Gastrocnemius medialis (tissue), 4 donors: ENCODE measurements at regions of chr17 and their contacts with region 1.

Region 1: GRCh38 chr17:40909351-40909750 is 24.3 kb upstream of the KRT20 start:
- DNase-seq: peak; percentile 52 to 67
- ATAC-seq: peak; percentile 87 to 90
- H3K4me3 ChIP-seq: no peak overlapping the region
- H3K27ac ChIP-seq: no peak overlapping the region
- H3K4me1 ChIP-seq: peaks cover 15% of the 10 kb centered on the region in 2 donors
- H3K27me3 ChIP-seq: peaks cover 0 to 9% (median 0%) of the 10 kb centered on the region in 3 donors
- CTCF ChIP-seq: peak; percentile 59 to 72 (median 66)
- POLR2A ChIP-seq: no peak

Region 2: DNA sequence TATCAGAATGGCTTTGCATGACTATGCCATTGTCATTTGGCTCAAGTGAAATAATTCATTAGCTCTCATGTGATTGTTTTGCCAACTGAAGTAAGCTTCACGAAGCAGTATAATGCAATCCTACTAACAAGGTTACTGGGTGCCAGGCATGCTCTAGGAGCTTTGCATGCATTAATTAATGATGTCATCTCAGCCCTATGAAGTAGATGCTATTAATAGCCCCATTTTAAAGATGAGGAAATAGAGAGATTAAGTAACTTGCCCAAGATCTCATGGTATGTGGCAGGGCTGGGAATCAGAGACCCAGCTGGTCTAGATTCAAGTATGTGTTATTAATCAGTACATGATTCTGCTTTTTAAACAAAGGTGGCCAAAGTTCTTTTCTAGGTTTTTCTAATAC is 43.3 kb after region 1 on chr17:
- in situ Hi-C with region 1: no loop called
- intact Hi-C with region 1: loop called (anchors 5 kb)
- DNase-seq: no peak
- ATAC-seq: peak; percentile 56 to 73
- H3K4me3 ChIP-seq: no peak overlapping the region
- H3K27ac ChIP-seq: peak overlapping the region in 3 of 4 donors; percentile 25 to 52 (median 46)
- H3K4me1 ChIP-seq: peaks cover 13 to 14% of the 10 kb centered on the region in 2 donors
- H3K27me3 ChIP-seq: peaks cover 3 to 15% (median 8%) of the 10 kb centered on the region in 3 donors
- CTCF ChIP-seq: no peak
- POLR2A ChIP-seq: no peak

Region 3: DNA sequence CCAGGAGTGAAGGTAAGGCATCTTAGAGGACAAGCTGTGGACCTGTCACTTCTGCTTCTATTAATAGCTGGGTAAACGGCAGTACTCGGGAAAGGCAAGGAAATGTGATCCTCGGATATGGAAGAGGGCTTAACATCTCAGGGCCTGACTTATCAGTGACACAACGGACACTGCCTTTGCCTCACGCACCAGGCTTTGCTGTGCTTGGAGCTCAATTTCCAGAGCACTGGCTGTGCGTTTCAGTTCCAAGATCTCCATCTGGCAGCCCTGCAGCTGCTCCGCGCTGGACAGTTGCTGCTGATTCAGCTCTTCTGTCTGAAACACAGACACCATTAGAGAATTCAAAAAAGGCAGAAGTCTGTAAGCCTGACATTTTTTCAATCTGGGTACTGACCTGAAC is 71.2 kb after region 1 on chr17:
- in situ Hi-C with region 1: no loop called
- intact Hi-C with region 1: loop called (anchors 2 kb)
- DNase-seq: peak; percentile 19 to 25
- ATAC-seq: peak; percentile 73 to 95
- H3K4me3 ChIP-seq: no peak overlapping the region
- H3K27ac ChIP-seq: peak overlapping the region in 1 of 4 donors; percentile 58
- H3K4me1 ChIP-seq: peaks cover 0 to 5% of the 10 kb centered on the region in 2 donors
- H3K27me3 ChIP-seq: no peaks in the 10 kb centered on the region
- CTCF ChIP-seq: no peak
- POLR2A ChIP-seq: no peak

Region 4: DNA sequence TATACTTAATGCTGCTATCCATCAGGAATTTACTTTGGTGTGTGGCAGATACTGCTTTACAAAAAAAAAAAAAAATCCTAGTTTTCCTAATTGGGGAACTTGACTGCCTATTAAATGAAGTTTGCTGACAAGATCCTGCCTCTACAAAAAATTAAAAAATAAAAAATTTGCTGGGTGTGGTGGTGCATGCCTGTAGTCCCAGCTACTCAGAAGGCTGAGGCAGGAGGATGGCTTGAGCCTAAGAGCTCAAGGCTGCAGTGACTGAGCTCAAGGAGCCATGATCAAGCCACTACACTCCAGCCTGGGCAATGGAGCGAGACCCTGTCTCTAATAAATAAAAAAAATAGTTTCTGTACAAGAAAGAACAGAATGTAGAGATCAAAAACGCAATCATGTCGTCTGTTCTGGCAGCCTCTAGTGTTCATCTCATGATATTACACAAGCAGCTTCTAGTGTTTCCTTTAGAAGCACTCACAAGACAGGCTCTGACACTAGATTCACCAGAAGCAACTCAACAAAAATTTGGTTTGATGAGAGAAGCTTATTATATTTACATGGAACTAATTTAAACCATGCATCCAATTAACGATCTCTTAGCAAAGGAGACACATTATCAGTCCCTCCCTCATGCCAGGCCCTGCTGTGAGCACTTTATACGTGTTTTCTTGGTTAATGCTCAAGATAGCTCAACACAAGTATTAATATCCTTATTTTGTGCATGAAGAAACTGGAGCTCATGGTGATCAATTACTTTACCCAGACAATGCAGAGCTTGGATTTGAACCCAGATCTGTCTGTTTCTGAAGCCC is 412.9 kb after region 1 on chr17:
- in situ Hi-C with region 1: loop called in 3 of 4 experiments (anchors 10 to 25 kb)
- intact Hi-C with region 1: loop called (anchors 5 kb)
- DNase-seq: no peak
- ATAC-seq: no peak
- H3K4me3 ChIP-seq: no peak overlapping the region
- H3K27ac ChIP-seq: no peak overlapping the region
- H3K4me1 ChIP-seq: no peaks in the 10 kb centered on the region
- H3K27me3 ChIP-seq: peaks cover 0 to 5% (median 0%) of the 10 kb centered on the region in 3 donors
- CTCF ChIP-seq: peak in 3 of 5 experiments; percentile 28 to 43 (median 31)
- POLR2A ChIP-seq: no peak

Region 5: GRCh38 chr17:41496820-41497408 is 587.6 kb after region 1 on chr17:
- in situ Hi-C with region 1: loop called in 1 of 4 experiments (anchors 25 kb)
- intact Hi-C with region 1: loop called (anchors 2 kb)
- DNase-seq: peak; percentile 22 to 48
- ATAC-seq: peak; percentile 36 to 55
- H3K4me3 ChIP-seq: no peak overlapping the region
- H3K27ac ChIP-seq: no peak overlapping the region
- H3K4me1 ChIP-seq: no peaks in the 10 kb centered on the region
- H3K27me3 ChIP-seq: no peaks in the 10 kb centered on the region
- CTCF ChIP-seq: peak in 4 of 5 experiments; percentile 40 to 57 (median 55)
- POLR2A ChIP-seq: no peak

Region 6: DNA sequence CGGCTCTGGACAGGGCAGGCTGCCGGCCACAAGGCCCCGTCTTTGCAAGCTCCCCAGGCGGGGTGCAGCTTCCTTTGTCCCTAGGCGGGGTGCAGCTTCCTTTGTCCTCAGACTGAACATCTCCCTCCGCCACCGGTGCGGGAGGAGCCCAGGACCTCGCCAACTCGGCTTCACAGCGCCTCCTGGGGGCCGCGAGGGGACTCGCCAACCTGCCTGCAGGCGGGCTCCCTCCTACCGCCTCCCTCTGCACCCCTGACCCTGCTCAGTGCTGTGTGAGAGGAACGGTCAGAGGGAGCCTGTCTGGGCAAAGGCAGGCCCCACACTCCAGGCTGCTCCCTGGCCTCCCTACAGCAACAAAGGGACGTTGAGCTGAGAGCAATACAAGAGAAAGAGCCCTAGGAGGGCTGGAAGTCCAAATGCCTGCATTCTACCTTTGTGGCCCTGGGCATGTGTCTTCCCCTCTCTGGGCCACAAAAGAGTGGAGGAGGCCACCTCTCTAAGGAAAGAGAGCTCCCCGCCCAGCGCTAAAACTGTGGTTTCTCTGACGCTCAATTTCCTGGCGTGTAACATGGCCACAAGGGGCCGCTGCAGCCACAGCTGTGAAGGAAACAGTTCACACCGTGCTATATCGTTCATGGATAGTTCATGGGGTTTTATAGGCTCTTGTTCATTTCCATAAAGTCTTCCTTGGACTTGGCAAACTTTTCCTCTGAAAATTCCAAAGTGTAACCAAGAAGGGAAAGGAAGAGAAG is 639.7 kb after region 1 on chr17:
- in situ Hi-C with region 1: loop called in 1 of 4 experiments (anchors 5 kb)
- intact Hi-C with region 1: loop called (anchors 1 kb)
- DNase-seq: peak; percentile 37 to 56
- ATAC-seq: peak; percentile 86 to 90
- H3K4me3 ChIP-seq: peak overlapping the region in 3 of 4 donors; percentile 4 to 36 (median 17)
- H3K27ac ChIP-seq: no peak overlapping the region
- H3K4me1 ChIP-seq: peaks cover 8 to 13% of the 10 kb centered on the region in 2 donors
- H3K27me3 ChIP-seq: peaks cover 0 to 3% (median 0%) of the 10 kb centered on the region in 3 donors
- CTCF ChIP-seq: peak; percentile 64 to 88 (median 80)
- POLR2A ChIP-seq: no peak

Region 7: GRCh38 chr17:41648411-41649195 is 739.3 kb after region 1 on chr17:
- in situ Hi-C with region 1: loop called in 1 of 4 experiments (anchors 10 kb)
- intact Hi-C with region 1: loop called (anchors 5 kb)
- DNase-seq: peak; percentile 57 to 79
- ATAC-seq: peak; percentile 95 to 96
- H3K4me3 ChIP-seq: peak overlapping the region; percentile 43 to 52 (median 46)
- H3K27ac ChIP-seq: peak overlapping the region in 1 of 4 donors; percentile 30
- H3K4me1 ChIP-seq: peaks cover 7 to 16% of the 10 kb centered on the region in 2 donors
- H3K27me3 ChIP-seq: no peaks in the 10 kb centered on the region
- CTCF ChIP-seq: peak; percentile 82 to 95 (median 91)
- POLR2A ChIP-seq: no peak